ENCODE measurements at regions of chr5 and their contacts with region 1.

Region 1: DNA sequence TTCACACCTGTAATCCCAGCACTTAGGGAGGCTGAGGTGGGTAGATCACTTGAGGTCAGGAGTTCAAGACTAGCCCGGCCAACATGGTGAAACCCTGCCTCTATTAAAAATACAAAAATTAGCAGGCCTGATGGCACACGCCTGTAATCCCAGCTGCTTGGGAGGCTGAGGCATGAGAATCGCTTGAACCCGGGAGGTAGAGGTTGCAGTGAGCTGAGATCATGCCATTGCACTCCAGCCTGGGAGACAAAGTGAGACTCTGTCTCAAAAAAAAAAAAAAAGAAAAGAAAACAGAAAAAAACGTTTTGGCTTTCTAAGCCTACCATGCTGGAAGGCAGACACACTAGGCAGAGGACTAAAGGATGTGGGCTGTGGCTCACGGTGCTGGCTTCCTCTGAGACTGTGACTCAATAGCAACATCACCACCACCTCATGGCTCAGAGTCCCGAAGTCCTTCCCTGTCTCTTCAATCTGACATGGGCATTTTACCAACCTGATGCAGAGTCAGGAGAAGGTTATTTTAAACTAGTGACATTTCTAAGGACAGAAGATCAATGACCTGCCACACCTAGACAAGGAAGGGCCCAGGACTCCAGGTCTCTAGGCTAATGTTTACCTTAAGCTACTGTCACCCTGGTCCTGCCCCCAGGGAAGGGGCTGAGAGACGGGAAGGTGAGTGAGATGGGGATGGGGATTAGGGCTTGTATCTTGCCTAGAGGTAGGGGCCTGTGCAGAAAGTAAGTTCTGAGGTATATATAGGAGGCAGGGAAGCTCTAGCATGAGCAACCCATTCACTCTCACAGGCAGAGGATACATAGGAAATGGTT is 3.8 kb downstream of the ECSCR start:
- DNase-seq: peak; percentile 90
- H3K4me3 Mint-ChIP-seq: peak overlapping the region; percentile 68
- H3K27ac Mint-ChIP-seq: peak overlapping the region; percentile 98
- H3K4me1 Mint-ChIP-seq: peaks cover 68% of the 10 kb centered on the region
- H3K27me3 Mint-ChIP-seq: no peaks in the 10 kb centered on the region

Region 2: GRCh38 chr5:139383275-139383992 is 75.4 kb before region 1 on chr5 and contains the start of gene SLC23A1:
- CTCF ChIA-PET with region 1: no interaction called
- POLR2A ChIA-PET with region 1: no interaction called
- DNase-seq: no peak
- H3K4me3 Mint-ChIP-seq: no peak within 1 kb of the TSS
- H3K27ac Mint-ChIP-seq: peak within 1 kb of the TSS; percentile 88
- H3K4me1 Mint-ChIP-seq: peaks cover 49% of the 10 kb centered on the region
- H3K27me3 Mint-ChIP-seq: no peaks in the 10 kb centered on the region
- total RNA-seq, gene SLC23A1: 1.0 to 1.8 TPM

Region 3: GRCh38 chr5:139422307-139422893 is 36.4 kb before region 1 on chr5:
- CTCF ChIA-PET with region 1: interaction called, 12 read pairs
- POLR2A ChIA-PET with region 1: interaction called, 4 read pairs
- DNase-seq: peak; percentile 59
- H3K4me3 Mint-ChIP-seq: no peak overlapping the region
- H3K27ac Mint-ChIP-seq: peak overlapping the region; percentile 36
- H3K4me1 Mint-ChIP-seq: peaks cover 46% of the 10 kb centered on the region
- H3K27me3 Mint-ChIP-seq: no peaks in the 10 kb centered on the region

Region 4: DNA sequence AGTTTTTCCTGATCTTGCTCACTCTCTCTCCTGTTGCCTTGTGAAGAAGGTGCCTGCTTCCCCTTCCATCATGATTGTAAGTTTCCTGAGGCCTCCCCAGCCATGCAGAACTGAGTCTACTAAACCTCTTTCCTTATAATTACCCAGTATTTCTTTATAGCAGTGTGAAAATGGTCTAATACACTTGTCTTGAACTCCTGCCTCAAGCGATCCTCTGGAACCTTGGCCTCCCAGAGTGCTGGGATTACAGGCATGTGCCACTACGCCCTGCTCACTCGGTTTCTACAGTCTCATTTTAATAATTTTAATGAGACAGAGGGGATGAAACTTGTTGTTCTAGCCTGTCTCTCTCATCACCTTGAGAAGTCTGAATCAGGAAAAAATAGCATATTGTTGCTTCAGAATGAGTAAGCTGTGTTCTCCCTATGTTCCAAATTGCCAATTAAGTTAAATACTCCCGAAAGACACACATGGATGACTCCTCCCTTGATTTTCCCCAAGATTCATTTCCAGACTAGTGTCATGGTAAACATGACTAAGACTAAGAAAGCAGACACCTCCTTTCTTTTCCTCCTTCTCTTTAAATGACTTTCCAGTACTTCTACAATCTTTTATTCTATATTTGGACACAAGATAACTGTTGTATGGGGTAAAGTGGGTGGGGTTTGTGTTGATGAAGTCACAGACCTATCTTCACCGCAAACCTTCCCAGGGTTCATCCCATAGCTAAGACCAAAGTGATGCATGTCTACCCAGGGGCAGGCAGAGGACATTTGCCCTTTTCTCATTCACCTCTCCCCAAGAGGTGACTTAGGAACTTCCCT is 11.6 kb before region 1 on chr5:
- CTCF ChIA-PET with region 1: interaction called, 9 read pairs
- POLR2A ChIA-PET with region 1: interaction called, 27 read pairs
- DNase-seq: peak; percentile 48
- H3K4me3 Mint-ChIP-seq: no peak overlapping the region
- H3K27ac Mint-ChIP-seq: peak overlapping the region; percentile 74
- H3K4me1 Mint-ChIP-seq: peaks cover 68% of the 10 kb centered on the region
- H3K27me3 Mint-ChIP-seq: no peaks in the 10 kb centered on the region

Region 5: DNA sequence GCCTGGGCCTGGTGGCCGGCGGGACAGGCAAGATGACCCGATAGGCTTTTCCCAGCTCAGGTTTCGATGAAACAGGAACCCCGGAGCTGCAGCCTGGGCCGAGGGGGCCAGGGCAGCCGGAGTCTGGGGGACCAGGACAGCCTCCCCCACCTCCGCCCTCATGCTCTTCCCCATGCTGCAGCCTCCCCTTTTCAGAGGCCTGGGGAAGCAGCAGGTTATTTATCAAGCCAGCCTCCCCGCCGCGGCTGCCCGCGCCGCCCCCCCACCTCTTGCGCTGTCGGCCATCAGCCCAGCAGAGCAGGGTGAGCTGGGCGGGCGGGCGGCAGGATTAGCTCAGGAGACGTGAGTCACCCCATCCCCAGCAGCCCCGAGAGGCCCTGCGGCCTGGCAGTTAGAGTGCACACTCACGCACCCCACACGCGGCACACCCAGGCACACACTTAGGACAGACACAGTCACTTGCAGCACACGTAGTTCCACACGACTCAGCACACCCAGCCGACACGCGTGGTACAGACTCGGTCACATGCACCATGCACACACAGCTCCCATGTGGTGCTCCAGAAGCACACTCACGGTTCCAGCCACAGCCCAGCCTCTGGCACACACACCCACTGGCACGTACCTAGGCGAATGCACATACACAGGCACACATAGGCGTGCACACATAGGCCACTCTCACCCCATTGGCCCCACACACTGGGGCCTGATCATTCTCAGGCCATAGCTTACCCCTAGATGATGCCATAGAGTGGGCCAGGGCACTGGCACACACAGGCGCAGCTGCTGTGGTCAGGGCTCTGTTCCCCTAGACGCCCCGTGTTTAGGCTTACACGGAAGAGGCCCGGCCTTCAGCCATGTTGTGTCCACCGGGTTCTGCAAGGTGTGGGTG is 202.4 kb after region 1 on chr5:
- CTCF ChIA-PET with region 1: no interaction called
- POLR2A ChIA-PET with region 1: no interaction called
- DNase-seq: no peak
- H3K4me3 Mint-ChIP-seq: no peak overlapping the region
- H3K27ac Mint-ChIP-seq: no peak overlapping the region
- H3K4me1 Mint-ChIP-seq: peaks cover 2% of the 10 kb centered on the region
- H3K27me3 Mint-ChIP-seq: no peaks in the 10 kb centered on the region